ENCODE measurements at regions of chr13 and their contacts with region 1.

Region 1: GRCh38 chr13:32125221-32125631 is 93.7 kb downstream of the FRY start:
- DNase-seq: no peak
- ATAC-seq: peak; percentile 59 to 95 (median 89)
- H3K4me3 ChIP-seq: no peak overlapping the region
- H3K27ac ChIP-seq: peak overlapping the region; percentile 47
- H3K4me1 ChIP-seq: peaks cover 23% of the 10 kb centered on the region
- H3K27me3 ChIP-seq: no peaks in the 10 kb centered on the region
- CTCF ChIP-seq: no peak

Region 2: DNA sequence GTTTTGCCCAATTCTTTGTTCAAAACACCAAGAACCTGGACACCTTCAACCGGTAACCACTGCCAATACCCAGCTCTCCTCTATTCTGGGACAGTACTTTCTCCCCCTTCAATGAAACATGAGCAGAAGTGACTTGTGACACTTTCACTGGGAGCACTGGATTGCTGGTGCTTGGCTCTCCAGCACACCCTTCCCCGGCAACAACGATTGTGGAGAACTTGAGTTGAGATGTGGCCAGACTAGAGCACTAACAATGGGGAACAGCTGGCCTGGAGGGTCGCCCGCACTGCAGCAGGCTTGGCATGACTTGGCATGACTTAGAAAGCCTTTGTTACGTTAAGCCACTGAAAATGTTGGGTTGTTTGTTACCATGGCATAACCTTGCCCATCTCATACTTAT is 932.9 kb before region 1 on chr13:
- intact Hi-C with region 1: no loop called
- DNase-seq: peak in 1 of 2 donors; percentile 55
- ATAC-seq: peak; percentile 75 to 87 (median 80)
- H3K4me3 ChIP-seq: no peak overlapping the region
- H3K27ac ChIP-seq: no peak overlapping the region
- H3K4me1 ChIP-seq: peaks cover 8% of the 10 kb centered on the region
- H3K27me3 ChIP-seq: no peaks in the 10 kb centered on the region
- CTCF ChIP-seq: no peak

Region 3: DNA sequence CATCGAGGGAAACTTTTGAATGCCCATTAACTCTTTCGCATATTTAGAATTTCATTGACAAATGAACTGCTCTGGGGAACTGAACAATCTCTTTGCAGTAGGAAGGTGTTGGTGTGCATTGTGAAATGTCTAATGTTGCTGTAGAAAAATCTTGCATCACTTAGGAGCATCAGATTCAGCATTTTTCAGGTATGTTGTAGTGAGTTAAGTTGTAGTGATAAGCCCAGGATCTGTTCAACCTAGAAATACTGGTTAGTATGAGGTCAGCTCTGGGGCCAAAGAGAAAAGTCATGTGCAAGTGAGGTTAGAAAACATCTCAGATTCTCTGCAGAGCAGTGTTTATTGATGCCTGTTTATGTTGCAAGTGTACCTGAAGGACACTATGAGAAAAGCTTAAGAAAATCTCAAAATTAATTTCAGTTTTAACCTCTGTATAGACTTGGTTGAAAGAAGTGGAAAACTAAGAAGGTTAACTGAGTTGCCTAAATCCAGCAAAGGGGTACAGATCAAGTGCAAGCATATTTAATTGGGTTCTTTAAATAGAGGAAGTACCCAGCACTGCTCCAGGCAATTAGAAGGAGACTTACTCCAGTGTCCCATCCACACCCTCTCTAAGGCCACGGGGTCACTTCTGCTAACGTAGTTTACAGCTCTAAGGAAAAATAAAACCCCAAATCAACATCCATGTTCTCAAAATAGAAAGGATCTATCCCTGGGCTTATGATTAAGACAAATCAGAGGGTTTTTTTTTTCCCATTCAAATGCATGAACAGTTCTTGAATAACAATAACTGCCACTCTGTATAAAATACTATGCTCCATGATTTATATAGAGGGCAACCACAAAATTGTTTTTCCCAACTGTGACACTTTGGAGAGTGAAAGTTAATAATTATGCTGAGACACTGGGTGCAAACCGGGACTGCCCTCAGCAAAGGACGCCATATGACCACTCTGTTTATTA is 89.2 kb before region 1 on chr13:
- intact Hi-C with region 1: loop called in 1 of 2 experiments (anchors 5 kb)
- DNase-seq: no peak
- ATAC-seq: no peak
- H3K4me3 ChIP-seq: no peak overlapping the region
- H3K27ac ChIP-seq: no peak overlapping the region
- H3K4me1 ChIP-seq: peaks cover 8% of the 10 kb centered on the region
- H3K27me3 ChIP-seq: no peaks in the 10 kb centered on the region
- CTCF ChIP-seq: no peak

Region 4: DNA sequence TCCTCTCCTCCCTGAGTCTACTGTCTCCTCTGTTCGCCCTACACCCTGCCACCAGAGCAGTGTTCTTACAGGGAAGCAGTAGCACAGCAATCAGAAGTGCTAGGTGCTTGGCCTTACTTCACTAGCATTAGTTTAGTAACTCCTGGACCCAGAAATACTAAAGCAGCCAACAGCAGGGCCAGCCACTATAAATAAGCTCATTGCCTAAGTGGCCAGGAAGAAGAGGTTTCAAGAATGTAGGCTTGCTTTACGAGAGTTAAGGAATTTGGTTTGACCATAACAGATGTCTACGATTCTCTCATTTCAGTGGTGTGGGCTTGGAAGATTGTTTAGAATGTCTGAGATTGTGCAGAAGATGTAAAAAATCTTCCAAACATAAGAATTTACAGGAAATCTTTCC is 86.6 kb after region 1 on chr13:
- intact Hi-C with region 1: no loop called
- DNase-seq: no peak
- ATAC-seq: peak; percentile 79 to 89 (median 84)
- H3K4me3 ChIP-seq: no peak overlapping the region
- H3K27ac ChIP-seq: no peak overlapping the region
- H3K4me1 ChIP-seq: no peaks in the 10 kb centered on the region
- H3K27me3 ChIP-seq: no peaks in the 10 kb centered on the region
- CTCF ChIP-seq: no peak

Region 5: GRCh38 chr13:32581177-32581786 is 456.1 kb after region 1 on chr13:
- intact Hi-C with region 1: no loop called
- DNase-seq: no peak
- ATAC-seq: no peak
- H3K4me3 ChIP-seq: no peak overlapping the region
- H3K27ac ChIP-seq: no peak overlapping the region
- H3K4me1 ChIP-seq: no peaks in the 10 kb centered on the region
- H3K27me3 ChIP-seq: no peaks in the 10 kb centered on the region
- CTCF ChIP-seq: peak; percentile 46